Naive thymus-derived CD4-positive, alpha-beta T cell (primary cell): ENCODE measurements at regions of chr13 and their contacts with region 1.

Region 1: GRCh38 chr13:110485603-110486002 is 75.9 kb downstream of the RAB20 start:
- DNase-seq: no peak
- ATAC-seq: no peak
- H3K4me3 ChIP-seq: no peak overlapping the region
- H3K4me3 Mint-ChIP-seq: no peak overlapping the region
- H3K27ac ChIP-seq: no peak overlapping the region
- H3K27ac Mint-ChIP-seq: no peak overlapping the region
- H3K4me1 ChIP-seq: no peaks in the 10 kb centered on the region
- H3K4me1 Mint-ChIP-seq: no peaks in the 10 kb centered on the region
- H3K27me3 ChIP-seq: no peaks in the 10 kb centered on the region
- H3K27me3 Mint-ChIP-seq: peaks cover 0 to 4% (median 0%) of the 10 kb centered on the region in 5 donors

Region 2: GRCh38 chr13:110149036-110149435 is 336.6 kb before region 1 on chr13:
- CTCF ChIA-PET with region 1: no interaction called
- POLR2A ChIA-PET with region 1: no interaction called
- intact Hi-C with region 1: loop called in 1 of 2 experiments (anchors 5 kb)
- DNase-seq: no peak
- ATAC-seq: no peak
- H3K4me3 ChIP-seq: no peak overlapping the region
- H3K4me3 Mint-ChIP-seq: no peak overlapping the region
- H3K27ac ChIP-seq: no peak overlapping the region
- H3K27ac Mint-ChIP-seq: no peak overlapping the region
- H3K4me1 ChIP-seq: no peaks in the 10 kb centered on the region
- H3K4me1 Mint-ChIP-seq: peaks cover 0 to 4% (median 0%) of the 10 kb centered on the region in 7 donors
- H3K27me3 ChIP-seq: no peaks in the 10 kb centered on the region
- H3K27me3 Mint-ChIP-seq: peaks cover 0 to 8% (median 7%) of the 10 kb centered on the region in 5 donors